ENCODE measurements at regions of chr5 and their contacts with region 1.

Region 1: DNA sequence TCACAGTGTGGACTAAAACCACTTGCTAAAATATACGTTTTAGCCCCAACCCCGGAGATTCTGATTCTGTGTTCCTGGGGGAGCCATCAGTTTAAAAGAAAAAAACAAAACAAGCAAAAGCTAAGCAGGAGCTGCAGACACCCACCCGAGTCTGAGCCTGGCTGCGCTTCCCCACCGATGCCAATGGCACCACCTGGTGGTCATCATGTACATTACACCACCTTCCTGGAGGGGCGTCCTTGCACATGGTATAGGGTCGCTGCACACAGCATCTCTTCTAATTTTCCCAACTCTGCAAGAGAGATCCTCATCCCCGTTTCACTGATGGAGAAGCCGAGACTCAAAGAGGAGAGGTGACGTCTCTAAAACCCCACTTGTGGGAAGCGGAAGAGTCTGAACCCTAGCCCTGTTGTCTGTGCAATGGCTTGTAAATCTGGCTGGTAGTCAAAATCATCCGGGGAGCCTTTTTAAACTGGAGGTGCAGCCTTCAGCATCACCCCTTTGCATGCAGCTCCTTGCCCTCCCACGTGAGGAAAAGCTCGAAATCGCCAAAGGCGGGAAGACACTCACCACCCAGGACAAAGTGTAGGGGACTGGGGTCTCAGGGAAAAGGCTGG is 23.1 kb upstream of the CNOT6 start:
- DNase-seq: peak; percentile 70
- ATAC-seq: peak; percentile 22 to 70; a peak in 3 of 6 replicates
- H3K4me3 ChIP-seq: no peak overlapping the region
- H3K27ac ChIP-seq: peak overlapping the region in 1 of 2 experiments; percentile 61; a peak in 4 of 6 replicates
- H3K4me1 ChIP-seq: peaks cover 40% of the 10 kb centered on the region
- CTCF ChIP-seq: peak; percentile 93
- EP300 ChIP-seq: no peak
- POLR2A ChIP-seq: no peak
- RAD21 ChIP-seq: peak; percentile 93 to 95

Region 2: DNA sequence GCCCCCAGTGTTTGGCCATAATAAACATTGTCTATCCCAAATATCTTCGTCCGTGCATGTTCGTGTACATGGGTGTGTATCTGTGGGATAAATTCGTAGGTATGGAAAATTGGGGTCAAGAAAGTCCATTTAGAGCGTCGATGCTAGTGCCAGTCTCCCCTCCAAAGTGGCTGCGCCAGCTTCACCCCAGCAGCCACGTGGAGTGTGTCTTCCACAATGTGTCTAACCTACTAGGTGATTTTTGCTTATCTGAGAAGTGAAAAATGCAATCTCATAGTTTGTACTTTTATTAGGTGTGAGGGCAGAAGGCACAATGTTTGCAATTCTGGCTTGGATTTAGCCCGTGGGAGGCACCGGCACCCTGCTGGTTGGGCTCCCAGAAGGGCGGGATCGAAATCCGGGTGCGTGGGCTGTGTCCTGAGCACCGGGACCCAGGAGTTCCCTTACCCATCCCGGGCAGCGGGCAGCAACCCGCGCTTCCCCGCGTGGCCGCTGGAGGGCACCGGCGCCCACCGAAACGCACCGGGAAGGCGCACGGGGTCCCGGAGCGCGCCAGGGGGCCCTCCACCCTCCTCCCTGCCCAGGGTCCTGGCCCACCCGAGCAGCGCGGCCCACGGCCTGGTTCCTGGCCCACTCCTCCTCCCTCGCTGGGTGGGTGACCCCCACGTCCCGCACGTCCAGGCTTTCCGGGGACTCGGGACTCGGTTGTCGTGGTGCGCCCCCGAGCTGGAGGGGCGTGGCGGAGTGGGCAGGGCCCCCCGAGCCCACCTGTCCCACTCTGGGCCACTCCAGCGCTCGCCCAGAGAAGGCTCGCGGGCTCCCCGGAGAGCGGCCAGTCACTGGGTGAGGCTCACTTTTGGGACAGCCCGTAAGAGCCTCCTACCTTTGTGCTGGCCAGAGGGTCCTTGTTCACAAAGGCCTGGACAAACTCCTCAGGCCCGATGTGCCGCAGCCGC is 344.1 kb before region 1 on chr5:
- CTCF ChIA-PET with region 1: interaction called, 13 read pairs
- POLR2A ChIA-PET with region 1: no interaction called
- DNase-seq: peak; percentile 42 to 66
- ATAC-seq: peak; percentile 69 to 90
- H3K4me3 ChIP-seq: peak overlapping the region; percentile 37
- H3K27ac ChIP-seq: peak overlapping the region in 1 of 2 experiments; percentile 55; a peak in 2 of 6 replicates
- H3K4me1 ChIP-seq: peaks cover 9% of the 10 kb centered on the region; the same call in 1 of the 3 replicates
- CTCF ChIP-seq: peak; percentile 49
- EP300 ChIP-seq: no peak
- POLR2A ChIP-seq: no peak
- RAD21 ChIP-seq: peak; percentile 60 to 73

Region 3: GRCh38 chr5:180304431-180305375 is 166.4 kb before region 1 on chr5:
- CTCF ChIA-PET with region 1: interaction called, 33 read pairs
- POLR2A ChIA-PET with region 1: no interaction called
- DNase-seq: no peak
- ATAC-seq: no peak; a peak in 1 of 6 replicates
- H3K4me3 ChIP-seq: no peak overlapping the region
- H3K27ac ChIP-seq: no peak overlapping the region
- H3K4me1 ChIP-seq: no peaks in the 10 kb centered on the region
- CTCF ChIP-seq: no peak
- EP300 ChIP-seq: no peak
- POLR2A ChIP-seq: no peak
- RAD21 ChIP-seq: no peak

Region 4: GRCh38 chr5:180328296-180329137 is 142.6 kb before region 1 on chr5:
- CTCF ChIA-PET with region 1: interaction called, 181 read pairs
- POLR2A ChIA-PET with region 1: interaction called, 7 read pairs
- DNase-seq: peak; percentile 88 to 89
- ATAC-seq: peak; percentile 48 to 72; a peak in 5 of 6 replicates
- H3K4me3 ChIP-seq: no peak overlapping the region
- H3K27ac ChIP-seq: peak overlapping the region; percentile 75 to 86; a peak in 5 of 6 replicates
- H3K4me1 ChIP-seq: peaks cover 60% of the 10 kb centered on the region
- CTCF ChIP-seq: peak; percentile 89
- EP300 ChIP-seq: no peak
- POLR2A ChIP-seq: no peak
- RAD21 ChIP-seq: peak; percentile 71 to 74

Region 5: DNA sequence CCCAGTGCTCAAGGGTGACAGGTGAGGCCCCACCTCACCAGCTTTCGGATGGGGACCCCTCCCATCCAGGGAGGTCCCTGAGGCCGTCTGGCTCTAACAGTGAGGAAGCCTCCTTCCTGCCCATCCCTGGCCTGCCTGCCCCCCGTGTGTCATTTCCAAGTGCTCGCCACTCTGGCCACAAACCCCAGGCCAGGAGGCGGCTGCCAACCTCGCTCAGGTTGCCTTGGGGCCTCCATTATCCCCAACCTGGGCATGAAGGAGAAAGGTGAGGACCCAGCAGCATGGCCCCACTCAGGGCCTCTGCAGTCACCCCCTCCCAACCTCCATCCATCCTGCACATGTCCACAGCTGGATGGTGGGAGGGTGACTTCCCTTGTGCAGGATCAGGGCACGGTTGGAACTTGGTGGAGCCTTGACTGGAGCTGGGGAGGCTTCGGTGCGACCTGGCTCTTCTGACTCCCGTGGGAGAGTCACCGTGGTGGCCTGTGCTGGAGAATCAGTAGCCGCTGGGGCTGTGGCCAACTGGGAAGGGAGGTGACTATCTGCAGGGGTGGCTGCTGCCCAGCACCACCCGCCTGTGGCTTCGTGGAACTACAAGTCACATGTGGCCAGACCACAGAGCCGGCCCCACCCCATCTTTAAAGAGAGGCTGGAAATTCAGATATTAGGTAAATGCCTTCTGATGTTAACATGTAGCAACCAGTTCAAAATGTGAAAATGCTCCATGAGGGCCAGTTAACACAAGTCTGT is 80.5 kb before region 1 on chr5:
- CTCF ChIA-PET with region 1: no interaction called
- POLR2A ChIA-PET with region 1: no interaction called
- DNase-seq: peak in 1 of 2 experiments; percentile 30
- ATAC-seq: peak; percentile 60 to 75
- H3K4me3 ChIP-seq: no peak overlapping the region
- H3K27ac ChIP-seq: 0 out of 6 replicates have a peak overlapping the region, but pooled peaks of 1 of the 2 experiments have one; percentile 32
- H3K4me1 ChIP-seq: peaks cover 5% of the 10 kb centered on the region
- CTCF ChIP-seq: no peak
- EP300 ChIP-seq: no peak
- POLR2A ChIP-seq: no peak
- RAD21 ChIP-seq: peak in 1 of 2 experiments; percentile 17; a peak in 1 of 5 replicates

Region 6: DNA sequence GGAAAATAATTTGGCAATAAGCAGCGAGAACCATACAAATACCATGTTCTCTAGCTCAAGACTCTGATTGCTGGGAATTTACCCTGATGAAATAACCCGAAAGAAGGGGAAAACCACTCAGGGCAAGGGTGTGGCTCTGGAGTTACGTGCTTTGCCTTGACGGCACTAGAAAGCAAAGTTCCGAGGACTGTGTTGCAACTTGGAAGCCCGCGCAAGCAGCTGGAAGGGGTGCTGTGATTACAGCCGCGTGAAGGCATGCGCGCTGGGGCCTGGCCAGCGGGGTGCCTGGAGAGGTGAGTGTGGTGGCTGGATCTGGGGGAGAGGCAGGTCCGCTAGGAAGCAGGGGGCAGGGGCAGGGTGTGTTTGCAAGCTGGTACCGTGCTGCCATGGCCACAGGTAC is 29.5 kb before region 1 on chr5:
- CTCF ChIA-PET with region 1: interaction called, 15 read pairs
- POLR2A ChIA-PET with region 1: interaction called, 10 read pairs
- DNase-seq: peak; percentile 33 to 87
- ATAC-seq: peak; percentile 85 to 93
- H3K4me3 ChIP-seq: no peak overlapping the region
- H3K27ac ChIP-seq: peak overlapping the region; percentile 76 to 85
- H3K4me1 ChIP-seq: peaks cover 23% of the 10 kb centered on the region
- CTCF ChIP-seq: no peak
- EP300 ChIP-seq: peak; percentile 84 to 94; a peak in 3 of 5 replicates
- POLR2A ChIP-seq: no peak
- RAD21 ChIP-seq: peak in 1 of 2 experiments; percentile 51; a peak in 3 of 5 replicates

Region 7: DNA sequence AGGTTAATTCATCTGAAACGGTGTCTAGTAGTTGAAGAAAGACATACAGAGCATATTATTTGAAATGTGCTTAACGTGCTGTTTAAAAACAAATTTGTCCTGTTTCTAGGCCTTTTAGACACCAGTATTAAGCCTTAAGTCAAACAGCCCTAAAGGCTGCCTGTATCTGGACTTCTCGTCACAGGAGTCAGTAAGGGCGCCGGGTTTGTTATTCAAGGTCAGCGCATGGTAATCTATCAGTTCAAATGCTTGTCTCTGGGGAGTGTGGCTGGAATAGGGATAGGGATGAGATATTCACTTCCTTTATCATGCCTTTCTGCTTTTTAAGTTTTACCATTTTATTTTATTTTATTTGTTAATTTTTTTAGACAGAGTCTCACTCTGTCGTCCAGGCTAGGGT is 13.7 kb after region 1 on chr5:
- CTCF ChIA-PET with region 1: interaction called, 19 read pairs
- POLR2A ChIA-PET with region 1: no interaction called
- DNase-seq: no peak
- ATAC-seq: no peak; a peak in 1 of 6 replicates
- H3K4me3 ChIP-seq: no peak overlapping the region
- H3K27ac ChIP-seq: 0 out of 6 replicates have a peak overlapping the region, but pooled peaks of 1 of the 2 experiments have one; percentile 35
- H3K4me1 ChIP-seq: 0 out of 3 replicates have a peak, but pooled peaks cover 3% of the 10 kb centered on the region
- CTCF ChIP-seq: no peak
- EP300 ChIP-seq: no peak
- POLR2A ChIP-seq: no peak
- RAD21 ChIP-seq: no peak